ENCODE measurements at regions of chr18 and their contacts with region 1.

Region 1: DNA sequence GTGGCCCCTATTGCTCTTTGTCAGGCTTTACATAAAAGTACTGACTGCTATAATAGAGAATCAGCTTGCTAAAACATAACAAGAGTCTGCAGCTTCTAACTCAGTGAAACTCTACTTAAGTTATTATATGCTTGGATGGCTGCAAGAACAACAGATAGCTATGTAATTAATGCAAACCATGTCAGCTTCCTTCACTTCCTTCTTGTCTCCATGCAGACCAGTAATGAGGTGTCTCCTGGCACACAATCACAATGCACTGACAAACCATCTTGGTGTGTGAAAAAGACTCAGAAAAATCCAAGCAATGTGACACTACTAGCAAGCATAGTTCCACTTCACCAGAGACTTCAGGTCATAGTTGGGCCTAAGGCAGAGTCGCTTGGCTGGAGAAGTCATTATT is 2068.9 kb upstream of the PIK3C3 start:
- DNase-seq: no peak
- H3K4me3 ChIP-seq: no peak overlapping the region
- H3K27ac ChIP-seq: no peak overlapping the region
- H3K4me1 ChIP-seq: no peaks in the 10 kb centered on the region
- H3K27me3 ChIP-seq: no peaks in the 10 kb centered on the region
- CTCF ChIP-seq: no peak

Region 2: DNA sequence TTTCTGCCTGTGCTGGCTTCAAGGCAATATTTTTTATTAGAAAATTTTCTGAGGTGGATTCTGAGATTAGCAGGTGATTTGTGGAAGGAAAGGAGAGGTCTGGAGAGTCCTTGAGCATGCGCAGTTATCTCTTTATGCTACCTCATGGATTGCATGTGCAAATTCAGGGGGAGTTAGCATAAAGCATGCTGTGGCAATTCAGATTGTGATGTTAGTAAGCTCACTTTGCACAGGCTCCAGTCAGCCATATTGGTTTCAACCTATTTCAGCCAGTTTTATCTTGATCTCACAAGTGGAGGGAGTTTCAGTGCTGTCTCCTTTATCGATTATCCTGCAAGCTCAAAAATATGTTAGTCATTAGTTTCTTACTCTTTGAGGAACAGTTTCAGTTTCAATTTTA is 56.6 kb after region 1 on chr18:
- intact Hi-C with region 1: loop called (anchors 2 kb)
- DNase-seq: no peak
- H3K4me3 ChIP-seq: no peak overlapping the region
- H3K27ac ChIP-seq: no peak overlapping the region
- H3K4me1 ChIP-seq: no peaks in the 10 kb centered on the region
- H3K27me3 ChIP-seq: no peaks in the 10 kb centered on the region
- CTCF ChIP-seq: no peak

Measured in ascending aorta (tissue), 2 donors.